Mammary epithelial cell (primary cell): ENCODE measurements at regions of chr15 and their contacts with region 1.

Region 1: GRCh38 chr15:47196057-47196456 is 521.2 kb upstream of the SEMA6D start:
- DNase-seq: peak; percentile 65
- H3K4me3 ChIP-seq: no peak overlapping the region
- H3K27ac ChIP-seq: no peak overlapping the region
- H3K4me1 ChIP-seq: no peaks in the 10 kb centered on the region
- H3K27me3 ChIP-seq: no peaks in the 10 kb centered on the region
- CTCF ChIP-seq: peak; percentile 83 to 89

Region 2: GRCh38 chr15:47473832-47474231 is 277.8 kb after region 1 on chr15:
- CTCF ChIA-PET with region 1: interaction called, 5 read pairs
- dilution Hi-C with region 1: no loop called
- in situ Hi-C with region 1: no loop called
- intact Hi-C with region 1: loop called (anchors 2 kb)
- DNase-seq: no peak
- H3K4me3 ChIP-seq: no peak overlapping the region
- H3K27ac ChIP-seq: no peak overlapping the region
- H3K4me1 ChIP-seq: no peaks in the 10 kb centered on the region
- H3K27me3 ChIP-seq: no peaks in the 10 kb centered on the region
- CTCF ChIP-seq: no peak

Region 3: DNA sequence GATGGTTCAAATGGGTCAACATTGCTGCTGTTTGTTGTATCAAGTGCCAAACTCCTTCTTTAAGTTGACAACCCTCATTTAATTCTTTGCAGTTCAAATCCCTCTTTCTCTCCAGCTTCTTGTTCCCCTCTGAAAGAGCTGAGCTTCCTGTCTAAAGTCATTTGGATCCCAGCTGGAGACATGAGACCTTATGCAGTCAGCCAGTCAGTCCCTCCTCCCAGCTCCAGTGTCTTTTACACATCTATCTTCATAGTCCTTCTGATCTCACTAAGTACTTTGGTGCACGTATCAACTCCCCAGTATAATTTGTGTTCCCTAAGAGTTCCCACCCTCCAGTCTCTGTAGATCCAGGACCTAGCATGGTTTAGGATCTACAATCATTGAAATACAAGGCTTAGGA is 418.3 kb after region 1 on chr15:
- CTCF ChIA-PET with region 1: no interaction called
- dilution Hi-C with region 1: no loop called
- in situ Hi-C with region 1: no loop called
- intact Hi-C with region 1: loop called (anchors 2 kb)
- DNase-seq: no peak
- H3K4me3 ChIP-seq: no peak overlapping the region
- H3K27ac ChIP-seq: no peak overlapping the region
- H3K4me1 ChIP-seq: no peaks in the 10 kb centered on the region
- H3K27me3 ChIP-seq: no peaks in the 10 kb centered on the region
- CTCF ChIP-seq: no peak

Region 4: GRCh38 chr15:47987908-47988532 is 792.0 kb after region 1 on chr15:
- CTCF ChIA-PET with region 1: interaction called, 10 read pairs
- dilution Hi-C with region 1: no loop called
- in situ Hi-C with region 1: loop called (anchors 5 to 10 kb)
- intact Hi-C with region 1: loop called (anchors 1 kb)
- DNase-seq: peak; percentile 32
- H3K4me3 ChIP-seq: no peak overlapping the region
- H3K27ac ChIP-seq: no peak overlapping the region
- H3K4me1 ChIP-seq: no peaks in the 10 kb centered on the region
- H3K27me3 ChIP-seq: no peaks in the 10 kb centered on the region
- CTCF ChIP-seq: peak; percentile 56 to 69

Region 5: DNA sequence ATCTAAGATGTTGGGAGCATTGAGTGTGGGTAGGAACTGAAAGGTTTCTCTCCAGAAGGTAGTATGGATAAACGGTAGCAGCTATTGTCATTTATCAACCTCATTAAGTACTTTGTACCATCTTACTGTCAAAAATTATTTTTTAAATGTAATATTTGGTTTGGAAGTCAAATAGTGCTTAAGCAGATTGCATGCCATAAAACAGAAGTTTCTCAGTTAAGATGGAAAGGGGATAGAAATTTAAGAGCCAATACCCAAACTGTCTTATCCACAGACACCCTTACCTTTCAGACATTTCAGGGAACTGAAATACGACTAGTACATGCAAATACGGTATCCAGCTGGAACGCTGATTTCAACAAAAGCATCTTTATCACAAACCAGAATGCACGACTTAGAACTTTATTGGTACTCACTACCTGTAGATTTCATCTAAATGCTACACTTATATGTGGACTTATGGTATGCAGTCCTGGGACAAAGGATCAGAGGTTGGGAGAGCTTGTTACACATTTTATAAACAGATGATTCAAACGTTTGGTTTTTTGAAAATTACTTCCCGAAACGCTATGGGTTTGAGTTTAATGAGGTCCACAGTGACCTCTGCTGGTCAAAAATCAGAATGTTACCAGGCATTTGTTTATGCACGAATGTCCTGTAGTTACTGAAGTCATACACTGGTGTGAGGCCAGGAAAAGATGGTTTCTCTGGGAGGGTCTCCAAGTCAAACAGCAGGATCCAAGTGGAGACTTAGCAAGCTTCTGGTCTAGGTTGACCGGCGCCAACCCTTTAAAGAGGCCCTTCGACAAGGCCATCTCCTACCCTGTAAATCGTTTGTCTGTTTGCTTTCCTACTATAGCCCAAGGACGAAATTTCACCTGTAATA is 1089.5 kb after region 1 on chr15:
- CTCF ChIA-PET with region 1: no interaction called
- dilution Hi-C with region 1: no loop called
- in situ Hi-C with region 1: loop called (anchors 25 kb)
- intact Hi-C with region 1: loop called (anchors 1 kb)
- DNase-seq: peak; percentile 63
- H3K4me3 ChIP-seq: no peak overlapping the region
- H3K27ac ChIP-seq: no peak overlapping the region
- H3K4me1 ChIP-seq: no peaks in the 10 kb centered on the region
- H3K27me3 ChIP-seq: peaks cover 6% of the 10 kb centered on the region
- CTCF ChIP-seq: peak; percentile 66 to 67